ENCODE measurements at regions of chr6 and their contacts with region 1.

Region 1: GRCh38 chr6:123777563-123777962 is 26.1 kb upstream of the NKAIN2 start:
- DNase-seq: no peak
- H3K4me3 ChIP-seq: no peak overlapping the region
- H3K27ac ChIP-seq: no peak overlapping the region
- H3K4me1 ChIP-seq: no peaks in the 10 kb centered on the region
- H3K27me3 ChIP-seq: no peaks in the 10 kb centered on the region
- CTCF ChIP-seq: peak in 2 of 3 experiments; percentile 19 to 33

Region 2: GRCh38 chr6:123518441-123519190 is 258.9 kb before region 1 on chr6:
- dilution Hi-C with region 1: no loop called
- DNase-seq: no peak
- H3K4me3 ChIP-seq: no peak overlapping the region
- H3K27ac ChIP-seq: no peak overlapping the region
- H3K4me1 ChIP-seq: no peaks in the 10 kb centered on the region
- H3K27me3 ChIP-seq: no peaks in the 10 kb centered on the region
- CTCF ChIP-seq: no peak

Region 3: GRCh38 chr6:123965894-123966293 is 188.3 kb after region 1 on chr6:
- dilution Hi-C with region 1: loop called (anchors 25 kb)
- DNase-seq: no peak
- H3K4me3 ChIP-seq: no peak overlapping the region
- H3K27ac ChIP-seq: no peak overlapping the region
- H3K4me1 ChIP-seq: no peaks in the 10 kb centered on the region
- H3K27me3 ChIP-seq: no peaks in the 10 kb centered on the region
- CTCF ChIP-seq: peak; percentile 60 to 88 (median 84)

Measured in keratinocyte (primary cell).